Endothelial cell of umbilical vein (primary cell): ENCODE measurements at regions of chr2 and their contacts with region 1.

Region 1: DNA sequence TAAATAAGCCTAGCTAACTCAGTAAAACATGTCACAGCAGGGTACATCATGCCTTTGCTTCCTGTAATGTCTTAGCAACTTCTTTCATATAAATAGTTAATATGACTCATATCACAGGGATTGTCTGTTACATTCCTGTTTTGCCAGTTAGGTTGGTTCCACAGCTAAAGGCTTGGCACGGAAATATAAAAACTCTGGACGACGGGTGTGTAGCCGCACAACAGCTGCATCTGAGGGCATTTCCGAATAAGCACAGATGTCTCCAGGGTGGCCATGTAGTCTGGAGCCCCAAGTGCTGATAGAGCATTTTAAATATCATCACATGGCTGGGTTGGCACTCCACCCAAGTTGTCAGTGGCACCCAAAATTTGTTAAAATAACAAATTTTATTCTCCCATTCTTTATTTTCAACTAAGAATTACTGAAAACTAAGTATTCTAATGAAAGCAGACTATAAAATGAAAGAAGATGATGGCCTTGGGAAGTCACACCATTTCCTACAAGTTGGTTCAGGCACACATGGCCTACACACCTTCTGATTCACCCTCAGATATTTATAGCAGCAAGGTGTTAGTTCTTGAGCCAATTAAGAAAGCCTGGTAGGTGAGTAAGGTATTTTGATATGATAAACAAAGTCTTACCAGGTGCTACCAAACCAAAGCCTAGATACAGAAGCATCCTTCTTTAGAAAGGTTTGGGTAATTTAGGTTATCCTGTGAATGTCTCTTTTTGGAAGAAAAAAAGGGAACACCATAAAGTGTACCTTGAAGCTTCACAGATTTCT is 61.8 kb upstream of the STK17B start:
- DNase-seq: peak; percentile 93
- H3K4me3 ChIP-seq: peak overlapping the region in 1 of 3 experiments; percentile 2
- H3K27ac ChIP-seq: peak overlapping the region; percentile 96
- H3K4me1 ChIP-seq: peaks cover 32% of the 10 kb centered on the region
- H3K27me3 ChIP-seq: no peaks in the 10 kb centered on the region
- CTCF ChIP-seq: no peak
- POLR2A ChIP-seq: no peak

Region 2: GRCh38 chr2:196149948-196150347 is 83.3 kb before region 1 on chr2:
- CTCF ChIA-PET with region 1: no interaction called
- POLR2A ChIA-PET with region 1: no interaction called
- dilution Hi-C with region 1: no loop called
- intact Hi-C with region 1: no loop called
- DNase-seq: no peak
- H3K4me3 ChIP-seq: no peak overlapping the region
- H3K27ac ChIP-seq: no peak overlapping the region
- H3K4me1 ChIP-seq: no peaks in the 10 kb centered on the region
- H3K27me3 ChIP-seq: no peaks in the 10 kb centered on the region
- CTCF ChIP-seq: no peak
- POLR2A ChIP-seq: no peak

Region 3: DNA sequence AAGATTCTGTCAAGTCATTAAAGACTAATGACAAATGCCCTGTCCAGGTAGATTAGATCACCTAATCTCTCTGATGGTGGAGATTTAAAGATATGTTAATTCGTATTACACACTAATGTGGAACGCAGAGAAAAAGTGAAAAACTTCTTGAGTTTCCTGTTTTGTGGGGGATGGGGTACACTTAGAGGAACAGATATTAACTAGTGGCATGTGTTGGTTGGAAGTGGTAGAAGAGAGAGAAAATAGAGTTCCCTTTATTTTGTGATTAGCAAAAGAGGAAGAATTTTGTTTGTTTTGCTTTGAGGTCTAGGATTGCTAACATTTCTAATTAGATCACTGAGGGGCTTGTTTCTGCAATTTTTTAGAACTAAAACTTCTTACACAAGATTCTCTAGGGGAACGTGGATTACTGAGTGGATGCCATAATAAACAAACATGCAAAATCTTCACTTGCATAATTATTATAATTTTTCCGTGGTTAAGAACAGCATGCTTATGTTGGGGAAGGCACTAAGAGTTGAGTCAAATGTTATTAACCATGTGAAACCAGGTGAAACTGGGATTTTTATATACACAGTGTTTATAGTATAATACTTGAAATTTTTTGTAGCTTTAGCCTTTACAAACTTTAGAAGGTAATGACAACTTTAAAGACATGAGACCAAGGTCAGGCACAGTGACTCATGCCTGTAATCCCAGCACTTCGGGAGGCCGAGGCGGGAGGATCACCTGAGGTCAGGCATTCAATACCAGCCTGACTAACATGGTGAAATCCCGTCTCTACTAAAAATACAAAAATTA is 35.5 kb after region 1 on chr2:
- CTCF ChIA-PET with region 1: interaction called, 4 read pairs
- POLR2A ChIA-PET with region 1: no interaction called
- dilution Hi-C with region 1: no loop called
- intact Hi-C with region 1: loop called (anchors 2 kb)
- DNase-seq: no peak
- H3K4me3 ChIP-seq: no peak overlapping the region
- H3K27ac ChIP-seq: peak overlapping the region; percentile 71
- H3K4me1 ChIP-seq: peaks cover 54% of the 10 kb centered on the region
- H3K27me3 ChIP-seq: no peaks in the 10 kb centered on the region
- CTCF ChIP-seq: no peak
- POLR2A ChIP-seq: no peak

Region 4: GRCh38 chr2:196277002-196277401 is 43.8 kb after region 1 on chr2:
- CTCF ChIA-PET with region 1: interaction called, 15 read pairs
- POLR2A ChIA-PET with region 1: interaction called, 3 read pairs
- dilution Hi-C with region 1: no loop called
- intact Hi-C with region 1: loop called (anchors 1 kb)
- DNase-seq: peak; percentile 46
- H3K4me3 ChIP-seq: peak overlapping the region in 2 of 3 experiments; percentile 38 to 60
- H3K27ac ChIP-seq: peak overlapping the region; percentile 14
- H3K4me1 ChIP-seq: peaks cover 58% of the 10 kb centered on the region
- H3K27me3 ChIP-seq: no peaks in the 10 kb centered on the region
- CTCF ChIP-seq: peak; percentile 32 to 41
- POLR2A ChIP-seq: no peak

Region 5: GRCh38 chr2:196601430-196602306 is 368.5 kb after region 1 on chr2:
- CTCF ChIA-PET with region 1: no interaction called
- POLR2A ChIA-PET with region 1: no interaction called
- dilution Hi-C with region 1: no loop called
- intact Hi-C with region 1: loop called (anchors 1 kb)
- DNase-seq: peak; percentile 88
- H3K4me3 ChIP-seq: no peak overlapping the region
- H3K27ac ChIP-seq: peak overlapping the region; percentile 82
- H3K4me1 ChIP-seq: peaks cover 25% of the 10 kb centered on the region
- H3K27me3 ChIP-seq: no peaks in the 10 kb centered on the region
- CTCF ChIP-seq: no peak
- POLR2A ChIP-seq: no peak

Region 6: DNA sequence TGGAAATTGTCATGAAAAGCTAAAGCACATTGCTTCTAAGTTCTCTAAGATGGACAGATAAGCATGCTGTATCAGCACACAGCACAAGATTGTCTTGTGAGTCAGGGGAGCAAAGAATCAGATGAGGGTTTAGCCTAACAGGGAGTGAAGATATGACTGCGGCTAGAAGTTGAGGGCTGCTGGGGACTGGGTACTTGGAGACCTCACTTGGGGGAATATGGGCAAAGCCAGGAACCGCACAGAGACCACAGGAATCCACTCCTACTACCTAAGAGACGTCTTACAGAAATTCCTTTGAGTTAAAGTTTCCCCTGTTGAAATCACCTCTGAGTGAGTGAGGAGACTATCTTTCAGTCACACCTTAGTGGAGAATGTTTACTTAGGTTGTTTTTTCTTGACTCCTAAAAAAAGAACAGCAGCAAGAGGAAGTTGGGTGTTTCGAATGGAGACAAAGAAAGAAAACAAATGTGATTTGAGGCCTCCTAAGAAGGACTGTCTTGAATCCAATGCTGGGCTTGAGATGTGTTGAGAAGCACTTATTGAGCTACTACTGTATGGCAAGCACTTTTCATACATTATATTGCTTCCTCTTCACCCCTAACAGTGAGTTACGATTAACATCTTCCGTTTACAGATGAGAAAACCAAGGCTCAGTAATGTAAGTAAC is 976.7 kb after region 1 on chr2:
- CTCF ChIA-PET with region 1: no interaction called
- POLR2A ChIA-PET with region 1: no interaction called
- dilution Hi-C with region 1: no loop called
- intact Hi-C with region 1: no loop called
- DNase-seq: no peak
- H3K4me3 ChIP-seq: no peak overlapping the region
- H3K27ac ChIP-seq: no peak overlapping the region
- H3K4me1 ChIP-seq: no peaks in the 10 kb centered on the region
- H3K27me3 ChIP-seq: peaks cover 0 to 1% of the 10 kb centered on the region in 2 experiments
- CTCF ChIP-seq: no peak
- POLR2A ChIP-seq: no peak